ENCODE measurements at regions of chr1 and their contacts with region 1.

Region 1: GRCh38 chr1:99599678-99600175 is 46.2 kb upstream of the PALMD start:
- DNase-seq: peak; percentile 47 to 96 (median 70)
- ATAC-seq: peak; percentile 93
- H3K4me3 ChIP-seq: no peak overlapping the region; the same call in 1 of the 2 replicates
- H3K27ac ChIP-seq: peak overlapping the region; percentile 75
- H3K4me1 ChIP-seq: peaks cover 6 to 31% of the 10 kb centered on the region in 2 experiments; a peak in 4 of 5 replicates
- H3K27me3 ChIP-seq: no peaks in the 10 kb centered on the region
- CTCF ChIP-seq: no peak
- EP300 ChIP-seq: peak; percentile 97
- POLR2A ChIP-seq: no peak
- RAD21 ChIP-seq: peak; percentile 23 to 37; a peak in 2 of 4 replicates

Region 2: DNA sequence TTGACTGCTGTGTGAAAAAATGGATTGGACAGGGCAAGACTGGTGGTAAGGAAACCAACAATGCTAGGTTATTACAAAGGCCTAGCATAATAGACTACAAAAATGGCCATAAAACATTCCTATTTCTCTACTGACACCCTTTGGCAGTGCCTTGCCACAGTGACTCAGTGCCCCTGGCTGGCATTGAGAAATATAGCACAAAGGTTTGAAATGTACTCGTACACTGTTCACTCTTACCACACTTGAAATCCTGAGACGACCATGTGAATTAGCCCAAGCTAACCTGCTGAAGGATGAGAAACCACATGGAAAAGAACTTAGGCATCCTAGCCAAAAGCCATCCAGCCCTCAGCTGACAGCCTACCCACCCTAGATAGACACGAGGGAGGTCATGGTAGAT is 103.7 kb before region 1 on chr1:
- CTCF ChIA-PET with region 1: no interaction called
- POLR2A ChIA-PET with region 1: no interaction called
- in situ Hi-C with region 1: no loop called
- intact Hi-C with region 1: loop called (anchors 5 kb)
- DNase-seq: no peak
- ATAC-seq: no peak
- H3K4me3 ChIP-seq: no peak overlapping the region
- H3K27ac ChIP-seq: no peak overlapping the region
- H3K4me1 ChIP-seq: no peaks in the 10 kb centered on the region
- H3K27me3 ChIP-seq: no peaks in the 10 kb centered on the region
- CTCF ChIP-seq: no peak
- EP300 ChIP-seq: no peak
- POLR2A ChIP-seq: no peak
- RAD21 ChIP-seq: no peak